ENCODE measurements at regions of chr3 and their contacts with region 1.

Region 1: GRCh38 chr3:196179380-196180308 is 31.6 kb downstream of the ZDHHC19 start:
- DNase-seq: peak; percentile 49 to 92 (median 78)
- ATAC-seq: peak; percentile 88
- H3K4me3 ChIP-seq: peak overlapping the region; percentile 42
- H3K4me3 Mint-ChIP-seq: peak overlapping the region; percentile 77
- H3K27ac ChIP-seq: peak overlapping the region; percentile 74 to 87
- H3K27ac Mint-ChIP-seq: peak overlapping the region; percentile 96
- H3K4me1 ChIP-seq: peaks cover 61% of the 10 kb centered on the region
- H3K4me1 Mint-ChIP-seq: peaks cover 40% of the 10 kb centered on the region
- H3K27me3 ChIP-seq: no peaks in the 10 kb centered on the region
- H3K27me3 Mint-ChIP-seq: no peaks in the 10 kb centered on the region
- CTCF ChIP-seq: no peak

Region 2: DNA sequence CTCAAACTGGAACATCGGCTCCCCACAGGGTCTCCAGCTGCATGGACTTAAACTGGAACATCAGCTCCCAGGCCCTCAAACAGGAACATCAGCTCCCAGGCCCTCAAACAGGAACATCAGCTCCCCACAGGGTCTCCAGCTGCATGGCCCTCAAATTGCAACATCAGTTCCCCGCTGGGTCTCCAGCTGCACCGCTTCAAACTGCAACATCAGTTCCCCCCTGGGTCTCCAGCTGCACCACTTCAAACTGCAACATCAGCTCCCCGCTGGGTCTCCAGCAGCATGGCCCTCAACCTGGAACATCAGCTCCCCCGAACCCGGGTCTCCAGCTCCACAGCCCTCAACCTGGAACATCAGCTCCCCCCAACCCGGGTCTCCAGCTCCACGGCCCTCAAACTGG is 179.7 kb before region 1 on chr3:
- CTCF ChIA-PET with region 1: no interaction called
- POLR2A ChIA-PET with region 1: no interaction called
- intact Hi-C with region 1: loop called in 1 of 2 experiments (anchors 10 kb)
- DNase-seq: no peak
- ATAC-seq: no peak
- H3K4me3 ChIP-seq: no peak overlapping the region
- H3K4me3 Mint-ChIP-seq: no peak overlapping the region
- H3K27ac ChIP-seq: no peak overlapping the region
- H3K27ac Mint-ChIP-seq: no peak overlapping the region
- H3K4me1 ChIP-seq: no peaks in the 10 kb centered on the region
- H3K4me1 Mint-ChIP-seq: no peaks in the 10 kb centered on the region
- H3K27me3 ChIP-seq: peaks cover 0 to 3% of the 10 kb centered on the region in 2 experiments
- H3K27me3 Mint-ChIP-seq: peaks cover 24% of the 10 kb centered on the region
- CTCF ChIP-seq: no peak

Region 3: GRCh38 chr3:196081791-196082618 is 97.6 kb before region 1 on chr3 and contains the start of gene TFRC:
- CTCF ChIA-PET with region 1: interaction called, 6 read pairs
- POLR2A ChIA-PET with region 1: interaction called, 27 read pairs
- intact Hi-C with region 1: loop called in 1 of 2 experiments (anchors 1 kb)
- DNase-seq: peak; percentile 88 to 98 (median 95)
- ATAC-seq: peak; percentile 92
- H3K4me3 ChIP-seq: peak within 1 kb of the TSS; percentile 60
- H3K4me3 Mint-ChIP-seq: peak within 1 kb of the TSS; percentile 91
- H3K27ac ChIP-seq: peak within 1 kb of the TSS; percentile 83 to 95
- H3K27ac Mint-ChIP-seq: peak within 1 kb of the TSS; percentile 89
- H3K4me1 ChIP-seq: peaks cover 42% of the 10 kb centered on the region
- H3K4me1 Mint-ChIP-seq: peaks cover 45% of the 10 kb centered on the region
- H3K27me3 ChIP-seq: no peaks in the 10 kb centered on the region
- H3K27me3 Mint-ChIP-seq: no peaks in the 10 kb centered on the region
- CTCF ChIP-seq: no peak
- total RNA-seq, gene TFRC: 154 to 159 TPM

Region 4: GRCh38 chr3:196192036-196192523 is 12.4 kb after region 1 on chr3:
- CTCF ChIA-PET with region 1: interaction called, 5 read pairs
- POLR2A ChIA-PET with region 1: interaction called, 28 read pairs
- intact Hi-C with region 1: no loop called
- DNase-seq: peak in 12 of 14 experiments; percentile 8 to 87 (median 32)
- ATAC-seq: peak; percentile 50
- H3K4me3 ChIP-seq: no peak overlapping the region
- H3K4me3 Mint-ChIP-seq: peak overlapping the region; percentile 51
- H3K27ac ChIP-seq: peak overlapping the region; percentile 61 to 85
- H3K27ac Mint-ChIP-seq: peak overlapping the region; percentile 90
- H3K4me1 ChIP-seq: peaks cover 54% of the 10 kb centered on the region
- H3K4me1 Mint-ChIP-seq: peaks cover 19% of the 10 kb centered on the region
- H3K27me3 ChIP-seq: no peaks in the 10 kb centered on the region
- H3K27me3 Mint-ChIP-seq: no peaks in the 10 kb centered on the region
- CTCF ChIP-seq: no peak

Region 5: DNA sequence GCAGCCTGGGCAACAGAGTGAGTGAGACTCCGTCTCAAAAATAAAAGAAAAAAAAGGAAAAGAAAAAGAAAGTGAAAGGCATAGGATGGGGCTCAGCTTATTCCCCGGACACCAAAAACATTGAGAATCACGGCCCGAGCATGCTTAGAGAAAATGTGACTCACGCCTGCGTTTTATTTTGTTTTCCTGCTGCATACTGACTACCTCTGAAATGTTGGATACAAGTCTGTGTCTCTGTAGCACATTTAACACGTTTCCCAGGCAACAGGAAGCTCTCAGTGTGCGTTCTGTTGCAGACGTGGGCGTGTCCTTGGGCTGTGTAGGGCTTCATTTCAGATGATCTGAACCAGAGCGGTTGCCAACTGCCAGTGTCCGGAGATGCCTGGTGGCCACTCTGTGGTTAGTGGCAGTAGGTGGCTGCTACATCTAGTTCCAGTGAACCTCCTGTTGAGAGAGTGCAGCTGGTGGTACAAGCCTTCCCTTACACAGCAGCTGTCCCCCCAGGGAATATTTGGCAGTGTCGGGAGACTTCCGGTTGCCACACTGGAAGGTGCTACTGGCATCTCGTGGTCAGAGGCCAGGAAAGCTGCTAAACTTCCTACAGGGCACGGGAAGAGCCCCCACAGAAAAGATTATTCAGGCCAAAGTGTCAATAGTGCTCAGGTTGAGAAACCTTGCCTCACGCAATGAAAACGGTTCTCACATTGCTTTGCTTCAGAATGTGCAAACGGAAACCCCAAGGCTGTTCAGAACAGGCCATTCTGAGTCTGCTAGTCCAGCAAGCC is 39.7 kb after region 1 on chr3:
- CTCF ChIA-PET with region 1: interaction called, 3 read pairs
- POLR2A ChIA-PET with region 1: interaction called, 12 read pairs
- intact Hi-C with region 1: loop called in 1 of 2 experiments (anchors 1 kb)
- DNase-seq: peak; percentile 53 to 84 (median 68)
- ATAC-seq: peak; percentile 97
- H3K4me3 ChIP-seq: peak overlapping the region; percentile 51
- H3K4me3 Mint-ChIP-seq: peak overlapping the region; percentile 66
- H3K27ac ChIP-seq: peak overlapping the region in 1 of 2 donors; percentile 14
- H3K27ac Mint-ChIP-seq: peak overlapping the region; percentile 82
- H3K4me1 ChIP-seq: peaks cover 16% of the 10 kb centered on the region
- H3K4me1 Mint-ChIP-seq: peaks cover 10% of the 10 kb centered on the region
- H3K27me3 ChIP-seq: no peaks in the 10 kb centered on the region
- H3K27me3 Mint-ChIP-seq: no peaks in the 10 kb centered on the region
- CTCF ChIP-seq: no peak

Region 6: DNA sequence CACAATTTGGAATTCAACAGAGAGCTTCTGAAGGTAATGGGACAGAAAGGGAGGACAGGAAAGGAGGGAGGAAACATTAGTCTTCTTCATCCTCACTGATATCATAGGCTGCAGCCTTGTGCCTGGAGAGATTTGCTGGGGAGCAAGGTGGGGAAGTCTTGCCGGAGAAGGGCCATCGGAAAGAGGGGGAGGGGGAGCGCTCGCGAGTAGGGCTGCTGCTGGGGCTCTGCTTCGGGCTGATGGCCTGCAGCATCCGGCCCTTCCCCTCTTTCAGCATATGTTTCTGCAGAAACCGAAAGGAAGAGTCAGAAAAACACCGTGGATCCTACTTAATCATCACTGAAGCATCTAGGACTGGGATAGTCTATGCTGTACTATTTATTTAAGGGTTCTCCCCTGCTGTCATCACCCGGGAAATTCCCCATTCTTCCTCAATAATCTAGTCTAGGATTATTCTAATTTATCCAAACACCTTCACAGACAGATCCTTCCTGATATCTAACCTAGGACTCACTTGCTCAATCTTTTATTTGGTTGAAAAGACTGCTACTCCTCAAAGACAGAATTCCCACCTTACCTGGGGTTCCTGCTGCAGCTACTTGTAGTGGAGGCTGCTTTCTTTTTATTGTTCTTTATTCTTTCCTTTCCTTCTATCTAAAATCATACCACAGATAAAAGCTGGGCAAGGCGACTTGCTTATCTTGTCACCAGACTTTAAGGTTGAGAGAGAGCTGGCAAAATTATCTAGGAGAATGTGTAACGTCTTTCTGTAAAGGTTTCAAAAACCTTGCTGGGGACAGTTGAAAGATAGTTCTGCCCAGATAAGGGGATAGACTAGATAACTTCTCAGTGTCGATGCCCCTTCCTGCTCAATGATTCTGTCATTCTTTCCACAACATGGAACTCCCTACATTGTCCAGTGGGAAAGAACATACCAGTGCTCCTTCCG is 59.2 kb after region 1 on chr3:
- CTCF ChIA-PET with region 1: no interaction called
- POLR2A ChIA-PET with region 1: no interaction called
- intact Hi-C with region 1: no loop called
- DNase-seq: no peak
- ATAC-seq: no peak
- H3K4me3 ChIP-seq: no peak overlapping the region
- H3K4me3 Mint-ChIP-seq: no peak overlapping the region
- H3K27ac ChIP-seq: no peak overlapping the region
- H3K27ac Mint-ChIP-seq: no peak overlapping the region
- H3K4me1 ChIP-seq: no peaks in the 10 kb centered on the region
- H3K4me1 Mint-ChIP-seq: no peaks in the 10 kb centered on the region
- H3K27me3 ChIP-seq: no peaks in the 10 kb centered on the region
- H3K27me3 Mint-ChIP-seq: no peaks in the 10 kb centered on the region
- CTCF ChIP-seq: no peak

Measured in CD4-positive, alpha-beta T cell (primary cell).